WTC11 (cell line): ENCODE measurements at regions of chr20 and their contacts with region 1.

Region 1: DNA sequence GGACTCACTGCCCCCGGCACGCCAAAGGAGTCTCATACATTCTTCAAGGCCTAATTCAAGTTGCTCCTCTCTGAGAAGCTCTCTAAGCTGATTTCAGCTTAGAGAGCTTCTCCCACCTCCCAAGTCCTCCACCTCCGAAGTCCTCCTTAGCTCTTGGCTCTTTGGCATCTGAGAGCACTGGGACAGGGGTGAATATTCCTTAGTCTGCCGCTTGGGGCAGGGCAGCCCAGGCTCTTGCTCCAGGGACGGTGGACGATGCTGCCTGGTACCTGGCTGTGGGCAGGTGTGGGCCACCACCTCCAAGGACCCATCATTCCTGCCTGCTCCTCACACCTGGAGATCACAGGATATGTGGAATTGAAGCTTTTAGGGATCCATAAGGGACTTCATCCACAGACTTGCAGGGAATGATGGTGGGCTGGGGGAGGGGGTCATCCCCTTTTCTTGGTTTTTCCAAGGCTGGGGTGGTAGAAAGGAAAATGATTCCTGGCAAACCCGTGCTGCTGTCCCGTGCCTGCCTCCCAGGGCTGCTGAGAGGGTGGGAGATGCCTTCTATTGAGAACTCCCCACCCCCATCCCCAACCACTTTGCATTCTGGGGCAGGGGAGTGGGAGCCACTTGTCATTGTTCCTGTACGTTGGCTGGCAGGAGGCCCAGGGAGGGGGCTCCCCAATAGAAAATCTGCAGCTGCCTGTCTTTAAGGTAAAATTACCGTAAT is 57.4 kb downstream of the ARHGAP40 start:
- DNase-seq: peak; percentile 76
- ATAC-seq: peak; percentile 99
- H3K4me3 Mint-ChIP-seq: no peak overlapping the region
- H3K27ac Mint-ChIP-seq: no peak overlapping the region
- H3K4me1 Mint-ChIP-seq: peaks cover 17% of the 10 kb centered on the region
- H3K27me3 Mint-ChIP-seq: peaks cover 54% of the 10 kb centered on the region
- CTCF ChIP-seq: peak; percentile 80

Region 2: GRCh38 chr20:38536310-38536709 is 122.7 kb before region 1 on chr20:
- CTCF ChIA-PET with region 1: no interaction called
- POLR2A ChIA-PET with region 1: no interaction called
- DNase-seq: no peak
- ATAC-seq: no peak
- H3K4me3 Mint-ChIP-seq: no peak overlapping the region
- H3K27ac Mint-ChIP-seq: no peak overlapping the region
- H3K4me1 Mint-ChIP-seq: no peaks in the 10 kb centered on the region
- H3K27me3 Mint-ChIP-seq: no peaks in the 10 kb centered on the region
- CTCF ChIP-seq: no peak

Region 3: GRCh38 chr20:38559764-38560163 is 99.3 kb before region 1 on chr20:
- CTCF ChIA-PET with region 1: no interaction called
- POLR2A ChIA-PET with region 1: no interaction called
- DNase-seq: no peak
- ATAC-seq: no peak
- H3K4me3 Mint-ChIP-seq: no peak overlapping the region
- H3K27ac Mint-ChIP-seq: no peak overlapping the region
- H3K4me1 Mint-ChIP-seq: no peaks in the 10 kb centered on the region
- H3K27me3 Mint-ChIP-seq: no peaks in the 10 kb centered on the region
- CTCF ChIP-seq: no peak

Region 4: DNA sequence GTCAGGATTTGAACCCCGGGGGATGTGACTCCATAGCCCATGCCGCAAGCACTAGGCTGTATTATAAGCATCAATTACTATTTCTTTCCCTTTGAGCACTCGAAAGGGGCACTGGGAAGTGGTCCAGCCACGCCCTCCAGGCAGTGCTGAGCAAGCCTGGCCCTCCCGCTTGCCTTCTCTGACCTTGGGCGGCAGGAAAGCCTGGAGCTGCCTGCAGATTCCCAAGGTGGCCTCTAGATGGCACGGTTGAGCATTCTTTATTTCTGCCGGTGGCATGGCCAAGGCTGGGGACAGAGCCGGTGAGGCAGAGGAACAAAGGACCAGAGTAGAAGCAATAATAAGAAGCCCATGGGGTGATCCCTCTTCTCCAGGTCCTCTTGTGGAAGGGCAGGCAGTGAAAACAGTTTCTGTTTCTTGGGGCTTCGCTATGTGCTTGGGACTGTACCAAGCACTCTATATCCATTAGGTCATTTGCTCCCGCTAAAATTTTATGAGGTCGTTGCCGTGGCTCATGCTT is 25.4 kb before region 1 on chr20:
- CTCF ChIA-PET with region 1: interaction called, 23 read pairs
- POLR2A ChIA-PET with region 1: no interaction called
- DNase-seq: peak; percentile 79
- ATAC-seq: peak; percentile 91
- H3K4me3 Mint-ChIP-seq: no peak overlapping the region
- H3K27ac Mint-ChIP-seq: no peak overlapping the region
- H3K4me1 Mint-ChIP-seq: peaks cover 22% of the 10 kb centered on the region
- H3K27me3 Mint-ChIP-seq: peaks cover 11% of the 10 kb centered on the region
- CTCF ChIP-seq: peak; percentile 81

Region 5: DNA sequence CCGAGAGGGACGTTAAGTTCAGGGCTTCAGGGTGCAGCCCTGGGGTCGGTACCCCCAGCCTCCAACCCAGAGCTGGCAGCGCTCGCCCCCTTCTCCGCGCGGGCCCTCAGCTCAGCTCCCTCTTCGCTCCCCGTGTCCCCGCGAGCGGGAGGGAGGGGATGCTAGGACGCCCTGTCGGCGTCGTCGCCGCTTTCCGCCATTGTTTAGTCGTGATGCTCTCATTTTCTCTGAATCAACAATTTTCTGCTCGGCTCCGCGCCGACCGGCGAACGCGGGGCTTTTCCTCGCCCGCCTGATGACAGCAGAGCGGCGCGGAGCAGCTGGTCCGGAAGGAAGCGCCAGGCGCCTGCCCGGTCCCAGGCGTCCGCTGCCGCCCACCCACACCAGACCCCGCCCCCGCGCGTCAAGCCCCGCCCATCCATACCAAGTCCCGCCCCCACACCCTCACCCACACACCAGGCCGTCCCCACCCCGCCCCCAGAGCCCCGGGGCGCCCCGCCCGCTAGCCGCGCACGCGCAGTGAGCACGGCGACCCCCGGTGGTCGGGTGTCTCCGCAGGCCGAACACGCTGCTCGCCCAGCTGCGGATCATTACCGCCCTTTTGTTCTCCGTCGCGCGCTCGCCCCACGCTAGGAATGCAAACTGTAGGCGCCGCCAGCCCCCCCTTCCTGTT is 15.2 kb after region 1 on chr20:
- CTCF ChIA-PET with region 1: interaction called, 51 read pairs
- POLR2A ChIA-PET with region 1: no interaction called
- DNase-seq: peak; percentile 83
- ATAC-seq: peak; percentile 88
- H3K4me3 Mint-ChIP-seq: peak overlapping the region; percentile 87
- H3K27ac Mint-ChIP-seq: no peak overlapping the region
- H3K4me1 Mint-ChIP-seq: peaks cover 42% of the 10 kb centered on the region
- H3K27me3 Mint-ChIP-seq: peaks cover 80% of the 10 kb centered on the region
- CTCF ChIP-seq: no peak

Region 6: DNA sequence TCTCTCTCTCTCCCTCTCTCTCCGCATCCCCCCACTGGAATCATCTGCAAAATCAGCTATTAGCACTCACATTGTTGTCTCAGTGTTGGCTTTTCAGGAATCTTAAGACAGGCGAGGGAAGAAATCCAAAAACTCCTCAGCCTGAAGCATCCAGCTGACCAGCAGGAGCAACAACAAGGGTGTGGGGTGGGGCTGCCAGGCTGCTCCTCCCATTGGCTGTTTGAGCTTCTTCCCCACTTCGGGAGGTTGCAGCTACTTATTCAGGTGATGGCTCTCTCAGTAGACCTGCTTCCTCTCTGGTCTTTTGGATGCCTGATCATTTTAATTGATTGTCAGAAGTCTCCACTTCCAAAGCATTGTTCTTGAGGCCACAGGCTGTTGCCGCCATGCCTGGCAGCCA is 41.1 kb after region 1 on chr20:
- CTCF ChIA-PET with region 1: interaction called, 10 read pairs
- POLR2A ChIA-PET with region 1: no interaction called
- DNase-seq: no peak
- ATAC-seq: peak; percentile 81
- H3K4me3 Mint-ChIP-seq: no peak overlapping the region
- H3K27ac Mint-ChIP-seq: no peak overlapping the region
- H3K4me1 Mint-ChIP-seq: no peaks in the 10 kb centered on the region
- H3K27me3 Mint-ChIP-seq: peaks cover 18% of the 10 kb centered on the region
- CTCF ChIP-seq: no peak

Region 7: DNA sequence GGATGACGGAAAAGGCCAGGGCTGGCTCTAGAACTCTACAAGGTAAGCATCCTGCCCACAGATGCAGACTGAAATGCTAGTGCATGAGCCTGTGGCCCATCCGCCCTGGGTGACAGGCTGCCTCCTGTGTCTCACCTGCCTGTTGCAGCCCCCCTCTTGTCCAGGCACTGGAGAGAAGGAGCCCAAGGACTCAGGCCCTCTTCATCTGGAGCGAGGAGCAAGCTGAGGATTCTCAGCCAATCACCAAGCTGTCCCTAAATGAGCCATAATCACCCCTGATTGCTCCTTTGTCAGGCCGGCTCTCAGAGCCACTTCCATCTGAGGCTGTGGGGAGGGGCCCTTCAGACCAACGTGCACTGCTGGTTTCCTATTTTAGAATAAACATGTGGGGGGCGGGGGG is 55.3 kb after region 1 on chr20:
- CTCF ChIA-PET with region 1: interaction called, 68 read pairs
- POLR2A ChIA-PET with region 1: no interaction called
- DNase-seq: no peak
- ATAC-seq: peak; percentile 61
- H3K4me3 Mint-ChIP-seq: no peak overlapping the region
- H3K27ac Mint-ChIP-seq: no peak overlapping the region
- H3K4me1 Mint-ChIP-seq: peaks cover 19% of the 10 kb centered on the region
- H3K27me3 Mint-ChIP-seq: peaks cover 37% of the 10 kb centered on the region
- CTCF ChIP-seq: no peak

Region 8: DNA sequence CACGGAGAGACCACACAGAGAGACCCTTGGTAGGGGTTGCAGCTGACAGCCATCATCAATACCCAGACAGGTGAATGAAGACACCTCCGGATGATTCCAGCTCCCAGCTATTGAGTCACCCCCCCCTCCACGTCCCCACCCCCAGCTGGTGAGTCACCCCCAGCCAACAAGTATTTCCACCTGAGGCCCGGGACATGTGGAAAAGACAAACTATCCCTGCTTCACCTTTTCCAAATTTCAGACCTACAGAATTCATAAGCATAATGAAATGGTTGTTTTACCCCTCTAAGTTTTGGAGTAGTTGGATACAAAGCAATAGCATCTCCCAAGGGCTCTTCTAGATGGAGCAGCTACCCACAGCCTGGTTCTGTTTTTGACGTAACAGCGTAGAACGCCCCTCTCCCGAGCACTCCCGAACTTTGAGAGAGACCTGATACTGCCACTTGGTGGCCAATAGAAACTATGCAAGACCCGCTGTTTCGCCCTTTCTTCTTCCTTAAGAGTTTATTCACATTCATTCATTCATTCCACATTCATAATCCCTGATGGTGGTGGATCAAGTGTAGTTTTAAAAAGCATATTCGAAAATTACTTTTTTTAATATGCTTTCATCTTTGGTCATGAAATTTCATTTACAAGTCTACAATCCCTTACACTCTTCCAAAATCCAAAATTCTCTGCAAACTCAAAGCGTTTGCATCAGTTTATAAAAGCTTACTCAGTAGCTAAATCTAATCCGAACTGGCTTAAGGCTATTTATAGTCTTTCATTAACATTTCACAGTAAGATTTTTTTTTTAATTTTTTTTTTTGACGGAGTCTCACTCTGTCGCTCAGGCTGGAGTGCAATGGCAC is 131.4 kb after region 1 on chr20:
- CTCF ChIA-PET with region 1: interaction called, 13 read pairs
- POLR2A ChIA-PET with region 1: no interaction called
- DNase-seq: peak; percentile 67
- ATAC-seq: peak; percentile 92
- H3K4me3 Mint-ChIP-seq: no peak overlapping the region
- H3K27ac Mint-ChIP-seq: no peak overlapping the region
- H3K4me1 Mint-ChIP-seq: no peaks in the 10 kb centered on the region
- H3K27me3 Mint-ChIP-seq: peaks cover 5% of the 10 kb centered on the region; the same call in 1 of the 2 replicates
- CTCF ChIP-seq: peak; percentile 65

Region 9: GRCh38 chr20:38873050-38873581 is 214.1 kb after region 1 on chr20:
- CTCF ChIA-PET with region 1: no interaction called
- POLR2A ChIA-PET with region 1: no interaction called
- DNase-seq: no peak
- ATAC-seq: no peak
- H3K4me3 Mint-ChIP-seq: no peak overlapping the region
- H3K27ac Mint-ChIP-seq: no peak overlapping the region
- H3K4me1 Mint-ChIP-seq: peaks cover 35% of the 10 kb centered on the region
- H3K27me3 Mint-ChIP-seq: no peaks in the 10 kb centered on the region; the same call in 1 of the 2 replicates
- CTCF ChIP-seq: no peak